GM10248 (cell line): ENCODE measurements at regions of chr22 and their contacts with region 1.

Region 1: GRCh38 chr22:41568811-41569210 is 8.0 kb downstream of the CSDC2 start:
- DNase-seq: no peak
- CTCF ChIP-seq: no peak

Region 2: GRCh38 chr22:41557401-41558240 is 11.2 kb before region 1 on chr22:
- CTCF ChIA-PET with region 1: interaction called, 10 read pairs
- POLR2A ChIA-PET with region 1: no interaction called
- DNase-seq: peak; percentile 65
- CTCF ChIP-seq: no peak

Region 3: GRCh38 chr22:41682033-41682807 is 113.4 kb after region 1 on chr22:
- CTCF ChIA-PET with region 1: no interaction called
- POLR2A ChIA-PET with region 1: no interaction called
- DNase-seq: peak; percentile 86
- CTCF ChIP-seq: no peak